Gastrocnemius medialis (tissue), 4 donors: ENCODE measurements at regions of chr19 and their contacts with region 1.

Region 1: GRCh38 chr19:6632002-6632621 is 37.8 kb downstream of the TNFSF14 start:
- DNase-seq: peak; percentile 24 to 33
- ATAC-seq: no peak
- H3K4me3 ChIP-seq: no peak overlapping the region
- H3K27ac ChIP-seq: no peak overlapping the region
- H3K4me1 ChIP-seq: no peaks in the 10 kb centered on the region
- H3K27me3 ChIP-seq: peaks cover 0 to 2% (median 0%) of the 10 kb centered on the region in 3 donors
- CTCF ChIP-seq: peak; percentile 52 to 79 (median 65)
- POLR2A ChIP-seq: no peak

Region 2: DNA sequence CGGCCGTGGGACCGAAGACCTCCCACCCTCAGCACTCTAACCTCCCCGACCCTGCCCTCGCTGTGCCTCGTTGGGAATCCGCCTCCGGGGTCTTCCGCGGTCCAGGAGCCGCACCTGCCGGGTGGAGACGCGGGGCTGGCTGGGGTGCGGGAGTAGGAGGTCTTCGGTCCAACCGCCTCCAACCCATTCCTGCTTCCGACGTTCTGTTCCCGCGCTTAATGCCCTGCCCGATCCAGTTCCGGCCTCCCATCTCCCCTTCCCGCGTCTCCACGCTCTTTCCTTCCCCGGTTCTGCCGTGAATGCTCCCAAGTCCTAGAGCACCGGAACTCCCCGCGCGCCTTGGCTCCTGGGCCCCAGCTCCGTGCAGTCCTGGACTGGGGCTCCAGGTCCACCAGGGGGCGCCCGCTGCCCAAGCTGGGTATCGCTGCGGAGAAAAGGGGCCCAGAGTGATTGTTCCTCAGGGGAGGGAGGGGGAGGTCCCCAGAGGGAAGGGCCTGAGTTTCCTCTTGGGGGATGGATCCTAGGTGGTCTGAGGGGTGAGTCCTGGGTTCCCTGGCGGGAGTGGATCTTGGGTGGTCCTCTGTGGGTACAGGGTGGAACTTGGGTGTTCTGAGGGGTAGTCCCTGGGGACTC is 115.3 kb before region 1 on chr19:
- in situ Hi-C with region 1: loop called (anchors 10 kb)
- intact Hi-C with region 1: loop called (anchors 1 kb)
- DNase-seq: peak; percentile 67 to 72
- ATAC-seq: peak; percentile 76 to 81
- H3K4me3 ChIP-seq: peak overlapping the region; percentile 63 to 82 (median 76)
- H3K27ac ChIP-seq: peak overlapping the region; percentile 64 to 82 (median 73)
- H3K4me1 ChIP-seq: peaks cover 0 to 2% of the 10 kb centered on the region in 2 donors
- H3K27me3 ChIP-seq: no peaks in the 10 kb centered on the region
- CTCF ChIP-seq: peak; percentile 74 to 97 (median 94)
- POLR2A ChIP-seq: no peak

Region 3: GRCh38 chr19:6587093-6587820 is 44.9 kb before region 1 on chr19:
- in situ Hi-C with region 1: no loop called
- intact Hi-C with region 1: no loop called
- DNase-seq: no peak
- ATAC-seq: no peak
- H3K4me3 ChIP-seq: no peak overlapping the region
- H3K27ac ChIP-seq: no peak overlapping the region
- H3K4me1 ChIP-seq: peaks cover 0 to 6% of the 10 kb centered on the region in 2 donors
- H3K27me3 ChIP-seq: peaks cover 62 to 72% (median 69%) of the 10 kb centered on the region in 3 donors
- CTCF ChIP-seq: no peak
- POLR2A ChIP-seq: no peak

Region 4: DNA sequence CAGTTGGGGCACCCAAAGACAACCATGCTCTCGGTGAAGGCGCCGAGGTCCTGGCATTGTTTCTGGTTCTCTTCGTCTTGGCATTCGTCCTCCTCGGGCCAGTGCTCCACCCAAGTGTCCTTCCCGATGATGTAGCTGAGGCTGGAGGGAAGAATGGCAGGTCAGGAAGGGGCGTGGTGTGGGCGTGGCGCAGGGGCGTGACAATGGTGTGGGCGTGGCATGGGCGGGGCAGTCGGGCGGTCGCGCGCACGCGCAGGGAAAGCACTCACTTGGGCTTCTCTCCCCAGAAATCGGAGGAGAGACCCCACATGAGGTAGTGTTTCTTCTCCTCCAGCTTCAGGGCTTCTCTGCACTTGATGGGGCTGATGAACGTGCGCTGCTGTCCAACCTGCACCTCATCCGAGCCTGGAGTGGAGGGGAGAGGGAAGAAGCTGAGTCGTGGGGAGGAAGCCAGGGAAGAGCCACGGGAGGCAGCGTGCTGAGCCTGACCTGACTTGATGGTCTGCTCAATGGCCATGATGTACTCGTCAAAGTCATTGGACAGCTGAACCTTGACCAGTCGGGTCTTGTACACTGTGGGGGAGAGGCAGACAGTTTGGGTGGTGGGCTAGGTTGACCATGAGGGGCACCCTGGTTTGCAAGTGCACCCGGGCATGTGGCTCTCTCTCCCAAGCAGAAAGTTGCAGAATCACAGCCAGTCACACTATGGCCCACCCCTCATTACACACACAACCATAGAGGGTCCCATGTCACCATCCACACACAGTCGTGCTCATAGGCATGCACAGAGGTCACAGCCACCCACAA is 46.0 kb after region 1 on chr19:
- in situ Hi-C with region 1: no loop called
- intact Hi-C with region 1: no loop called
- DNase-seq: no peak
- ATAC-seq: no peak
- H3K4me3 ChIP-seq: no peak overlapping the region
- H3K27ac ChIP-seq: no peak overlapping the region
- H3K4me1 ChIP-seq: no peaks in the 10 kb centered on the region
- H3K27me3 ChIP-seq: peaks cover 0 to 4% (median 0%) of the 10 kb centered on the region in 3 donors
- CTCF ChIP-seq: no peak
- POLR2A ChIP-seq: no peak

Region 5: DNA sequence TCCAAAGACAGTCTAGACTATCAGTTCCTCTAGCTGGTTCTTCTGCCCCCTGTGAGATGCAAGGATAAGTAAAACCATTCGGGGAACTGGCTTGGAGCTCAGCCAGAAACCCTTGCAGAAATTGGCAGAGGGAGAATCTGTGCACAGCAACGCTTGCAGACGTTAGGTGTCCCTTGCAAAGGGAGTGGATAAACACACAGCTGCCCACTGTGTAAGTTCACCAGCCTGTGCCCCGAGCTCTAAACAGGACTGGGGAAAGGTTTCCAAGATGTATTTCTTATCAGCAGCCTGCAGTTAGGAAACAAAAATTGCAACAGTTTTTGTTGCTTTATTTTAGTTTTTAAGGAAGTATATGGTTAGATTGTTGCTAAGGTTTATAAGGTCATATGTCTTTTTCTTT is 236.2 kb after region 1 on chr19:
- in situ Hi-C with region 1: loop called in 3 of 4 experiments (anchors 5 to 25 kb)
- intact Hi-C with region 1: loop called (anchors 5 kb)
- DNase-seq: peak in 1 of 2 donors; percentile 10
- ATAC-seq: no peak
- H3K4me3 ChIP-seq: no peak overlapping the region
- H3K27ac ChIP-seq: no peak overlapping the region
- H3K4me1 ChIP-seq: no peaks in the 10 kb centered on the region
- H3K27me3 ChIP-seq: no peaks in the 10 kb centered on the region
- CTCF ChIP-seq: no peak
- POLR2A ChIP-seq: no peak